ENCODE measurements at regions of chr7 and their contacts with region 1.

Region 1: DNA sequence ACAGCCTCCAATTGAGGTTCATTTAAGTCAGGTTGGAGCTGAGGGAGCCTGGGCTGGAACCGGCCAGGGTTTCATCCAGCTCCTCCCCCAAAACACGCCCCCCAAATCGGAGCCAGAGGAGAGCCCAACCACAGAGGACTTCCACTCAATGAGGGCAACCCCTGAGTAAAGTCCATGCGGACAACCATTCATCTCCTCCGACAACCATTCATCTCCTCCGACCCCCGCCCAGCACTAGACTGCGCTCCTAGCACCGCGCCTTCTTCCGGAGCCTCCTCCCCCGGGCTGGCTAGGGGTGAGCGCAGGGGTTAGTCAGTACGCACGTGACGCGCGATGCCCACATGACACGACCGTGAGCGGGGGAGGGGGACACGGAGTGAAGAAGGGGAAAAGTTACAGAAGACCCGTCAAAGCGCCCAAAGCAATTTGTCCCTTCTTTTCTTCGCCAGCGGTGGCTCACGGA is 1.4 kb downstream of the MAGI2 start:
- DNase-seq: peak; percentile 82
- ATAC-seq: peak; percentile 69
- H3K4me3 ChIP-seq: peak overlapping the region; percentile 54
- H3K27ac ChIP-seq: peak overlapping the region; percentile 96
- H3K4me1 ChIP-seq: peaks cover 8% of the 10 kb centered on the region
- H3K27me3 ChIP-seq: no peaks in the 10 kb centered on the region
- CTCF ChIP-seq: no peak
- POLR2A ChIP-seq: peak; percentile 72
- RAD21 ChIP-seq: no peak

Region 2: GRCh38 chr7:79282063-79282694 is 169.9 kb before region 1 on chr7:
- CTCF ChIA-PET with region 1: no interaction called
- POLR2A ChIA-PET with region 1: no interaction called
- dilution Hi-C with region 1: no loop called
- in situ Hi-C with region 1: no loop called
- intact Hi-C with region 1: loop called (anchors 2 kb)
- DNase-seq: peak; percentile 86
- ATAC-seq: peak; percentile 38
- H3K4me3 ChIP-seq: no peak overlapping the region; the same call in 1 of the 2 replicates
- H3K27ac ChIP-seq: peak overlapping the region; percentile 54
- H3K4me1 ChIP-seq: peaks cover 19% of the 10 kb centered on the region
- H3K27me3 ChIP-seq: no peaks in the 10 kb centered on the region
- CTCF ChIP-seq: peak; percentile 58
- POLR2A ChIP-seq: no peak
- RAD21 ChIP-seq: peak; percentile 56

Region 3: DNA sequence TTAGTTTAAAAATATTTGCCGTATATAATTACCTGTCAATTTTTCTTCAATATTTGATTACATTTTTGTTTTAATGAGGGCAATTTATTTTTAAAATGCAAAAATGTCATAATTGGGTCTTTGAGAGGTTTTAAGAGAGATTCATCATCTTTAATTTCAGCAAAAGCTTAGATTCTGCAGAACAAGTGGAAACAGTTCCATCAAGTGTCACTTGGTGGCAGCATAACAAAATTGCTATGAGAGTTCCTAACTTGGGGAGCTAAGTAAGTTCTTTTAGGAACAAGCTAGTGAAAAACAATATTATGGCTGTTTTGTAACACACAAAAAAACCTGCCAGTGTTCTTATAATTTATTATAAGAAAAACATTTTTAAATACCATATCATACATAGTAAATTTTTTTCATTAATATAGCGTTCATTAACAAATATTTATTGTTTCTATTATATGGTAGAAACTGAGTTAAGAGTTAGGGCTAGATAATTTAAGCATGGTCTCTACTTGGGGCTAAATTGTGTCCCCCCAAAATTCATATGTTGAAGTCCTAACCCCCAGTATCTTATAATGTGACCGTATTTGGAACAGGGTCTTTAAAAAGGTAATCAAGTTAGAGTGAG is 153.8 kb before region 1 on chr7:
- CTCF ChIA-PET with region 1: interaction called, 5 read pairs
- POLR2A ChIA-PET with region 1: interaction called, 4 read pairs
- dilution Hi-C with region 1: no loop called
- in situ Hi-C with region 1: no loop called
- intact Hi-C with region 1: loop called (anchors 5 kb)
- DNase-seq: peak; percentile 79
- ATAC-seq: peak; percentile 65
- H3K4me3 ChIP-seq: no peak overlapping the region
- H3K27ac ChIP-seq: no peak overlapping the region
- H3K4me1 ChIP-seq: peaks cover 3% of the 10 kb centered on the region; the same call in 1 of the 2 replicates
- H3K27me3 ChIP-seq: no peaks in the 10 kb centered on the region
- CTCF ChIP-seq: peak; percentile 70
- POLR2A ChIP-seq: no peak
- RAD21 ChIP-seq: peak; percentile 73

Region 4: DNA sequence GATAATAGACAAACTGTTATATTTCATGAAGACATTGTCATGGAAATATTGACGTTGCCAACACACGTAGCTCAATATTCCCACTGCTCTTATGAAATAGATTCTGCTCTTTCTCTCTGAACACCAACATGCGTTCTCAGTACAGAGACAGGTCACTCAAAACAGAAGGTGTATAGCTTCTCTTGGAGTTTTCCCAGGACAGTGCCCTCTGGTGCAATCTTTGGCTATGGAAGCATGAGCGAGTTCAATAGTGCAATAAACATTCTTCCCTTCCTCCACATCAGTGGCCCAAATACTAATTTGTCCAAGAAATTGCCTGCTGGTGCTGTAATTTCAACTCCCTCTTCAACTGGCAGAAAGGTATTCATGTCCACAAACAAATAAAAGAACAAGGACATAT is 143.9 kb before region 1 on chr7:
- CTCF ChIA-PET with region 1: no interaction called
- POLR2A ChIA-PET with region 1: no interaction called
- dilution Hi-C with region 1: no loop called
- in situ Hi-C with region 1: loop called (anchors 5 kb)
- intact Hi-C with region 1: no loop called
- DNase-seq: no peak
- ATAC-seq: no peak
- H3K4me3 ChIP-seq: no peak overlapping the region
- H3K27ac ChIP-seq: no peak overlapping the region
- H3K4me1 ChIP-seq: no peaks in the 10 kb centered on the region
- H3K27me3 ChIP-seq: no peaks in the 10 kb centered on the region
- CTCF ChIP-seq: no peak
- POLR2A ChIP-seq: no peak
- RAD21 ChIP-seq: no peak

Region 5: GRCh38 chr7:79741684-79742083 is 289.6 kb after region 1 on chr7:
- CTCF ChIA-PET with region 1: no interaction called
- POLR2A ChIA-PET with region 1: no interaction called
- dilution Hi-C with region 1: no loop called
- in situ Hi-C with region 1: no loop called
- intact Hi-C with region 1: loop called (anchors 2 kb)
- DNase-seq: no peak
- ATAC-seq: peak; percentile 42; the same call in 1 of the 2 replicates
- H3K4me3 ChIP-seq: no peak overlapping the region
- H3K27ac ChIP-seq: no peak overlapping the region
- H3K4me1 ChIP-seq: no peaks in the 10 kb centered on the region
- H3K27me3 ChIP-seq: no peaks in the 10 kb centered on the region
- CTCF ChIP-seq: peak; percentile 36; the same call in 1 of the 2 replicates
- POLR2A ChIP-seq: no peak
- RAD21 ChIP-seq: peak; percentile 50

Region 6: DNA sequence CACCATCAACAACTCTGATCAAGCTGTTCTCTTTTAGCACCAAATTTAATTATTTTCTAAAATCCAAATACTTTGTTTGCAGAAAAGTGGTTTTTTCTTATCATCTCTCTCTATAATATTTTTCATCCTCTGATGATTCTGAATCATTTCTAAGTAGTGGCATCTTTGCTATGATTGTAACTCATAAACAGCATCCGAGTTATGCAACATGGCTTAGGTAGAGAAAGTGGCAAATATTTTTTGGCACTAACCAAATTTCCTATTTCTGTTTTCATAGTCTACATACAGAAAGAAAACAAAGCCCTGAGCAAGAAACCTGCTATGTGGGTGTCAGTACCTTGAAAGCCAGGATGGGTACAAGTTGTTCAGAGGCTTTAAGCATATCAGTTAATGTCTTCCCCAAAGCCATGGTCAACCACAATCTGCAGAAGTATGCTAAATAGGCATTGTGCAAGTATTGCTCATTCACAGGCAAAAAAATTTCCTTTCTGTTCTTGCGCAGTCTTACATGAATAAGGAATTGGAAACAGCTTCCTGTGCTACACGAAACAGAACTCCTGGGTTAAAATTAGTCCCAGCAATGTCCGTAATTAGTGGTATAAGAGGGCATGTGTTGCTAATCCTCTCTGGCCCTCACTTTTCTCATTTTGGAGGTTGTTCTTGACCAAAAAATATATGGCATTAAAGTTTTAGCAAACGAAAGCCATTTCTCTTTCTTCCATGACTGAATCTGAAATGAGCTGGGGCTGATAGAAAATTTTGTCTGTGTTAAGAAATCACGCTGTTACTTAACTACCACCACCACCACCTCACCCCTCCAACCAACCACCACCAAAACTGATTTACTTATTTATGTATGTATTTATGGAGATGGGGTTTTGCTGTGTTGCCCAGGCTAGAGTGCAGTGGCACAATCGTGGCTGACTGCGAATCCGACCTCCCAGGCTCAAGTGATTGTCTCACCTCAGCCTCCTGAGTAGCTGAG is 327.0 kb after region 1 on chr7:
- CTCF ChIA-PET with region 1: no interaction called
- POLR2A ChIA-PET with region 1: no interaction called
- dilution Hi-C with region 1: no loop called
- in situ Hi-C with region 1: no loop called
- intact Hi-C with region 1: loop called (anchors 5 kb)
- DNase-seq: peak; percentile 94
- ATAC-seq: peak; percentile 95
- H3K4me3 ChIP-seq: no peak overlapping the region
- H3K27ac ChIP-seq: peak overlapping the region; percentile 72
- H3K4me1 ChIP-seq: peaks cover 12% of the 10 kb centered on the region; the same call in 1 of the 2 replicates
- H3K27me3 ChIP-seq: no peaks in the 10 kb centered on the region
- CTCF ChIP-seq: no peak
- POLR2A ChIP-seq: no peak
- RAD21 ChIP-seq: no peak

Measured in IMR-90 (cell line).